ENCODE measurements at regions of chr2 and their contacts with region 1.

Region 1: DNA sequence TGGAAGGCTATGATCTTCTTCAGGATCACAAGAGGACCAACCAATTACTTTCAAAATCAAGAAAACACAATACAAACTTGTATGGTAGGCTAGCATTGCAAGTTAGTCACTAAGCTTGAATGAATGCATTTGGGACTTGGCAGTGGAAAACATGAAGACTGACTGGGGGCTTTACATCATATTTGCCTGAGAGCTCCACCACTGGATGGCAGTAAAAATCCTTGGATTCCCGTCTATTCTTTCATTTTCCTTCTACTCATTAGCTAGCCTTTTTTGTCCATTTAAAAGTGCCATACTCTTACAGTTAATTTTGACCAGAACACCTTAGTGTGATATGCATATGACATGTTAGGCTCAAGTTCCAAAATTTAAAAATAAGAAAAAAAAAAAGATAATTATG is 63.5 kb upstream of the RASGRP3 start:
- DNase-seq: peak; percentile 48
- H3K4me3 ChIP-seq: no peak overlapping the region
- H3K27ac ChIP-seq: no peak overlapping the region
- H3K4me1 ChIP-seq: no peaks in the 10 kb centered on the region
- H3K27me3 ChIP-seq: no peaks in the 10 kb centered on the region
- CTCF ChIP-seq: peak; percentile 60

Region 2: DNA sequence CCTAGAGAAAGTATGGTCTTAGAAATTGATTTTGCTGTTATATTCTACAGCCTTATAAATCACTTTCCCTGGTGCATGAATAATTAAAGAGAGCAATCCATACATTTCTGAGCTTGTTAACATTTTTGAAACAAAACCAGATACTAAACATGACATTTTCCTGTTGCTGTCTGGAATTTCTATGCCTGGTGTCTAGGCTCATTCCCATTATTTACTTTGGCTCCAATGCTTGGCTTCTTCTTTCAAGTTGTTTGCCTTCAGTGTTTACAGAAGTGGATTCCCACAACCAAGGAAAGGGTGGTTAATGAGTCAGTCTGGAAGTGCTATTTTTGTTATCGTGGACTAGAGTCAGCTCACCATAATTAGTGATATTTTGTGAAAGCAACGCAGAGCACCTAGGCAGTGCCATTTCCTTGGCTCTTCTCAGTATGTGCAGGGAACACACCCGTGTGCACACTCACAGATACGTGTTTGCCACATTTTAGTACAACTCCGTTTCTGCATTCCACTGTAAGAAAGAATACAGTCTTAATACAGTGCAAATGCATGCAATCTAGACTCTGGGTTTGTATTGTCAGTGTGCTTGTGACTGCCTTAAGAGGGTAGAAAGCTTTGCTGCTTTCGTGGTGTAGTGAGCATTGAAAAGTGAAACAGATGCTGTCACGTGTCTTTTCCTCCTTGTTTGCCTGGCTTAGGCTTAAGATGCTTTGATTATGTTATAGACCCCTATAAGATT is 121.5 kb before region 1 on chr2:
- CTCF ChIA-PET with region 1: no interaction called
- POLR2A ChIA-PET with region 1: no interaction called
- intact Hi-C with region 1: no loop called
- DNase-seq: no peak
- H3K4me3 ChIP-seq: no peak overlapping the region
- H3K27ac ChIP-seq: no peak overlapping the region
- H3K4me1 ChIP-seq: no peaks in the 10 kb centered on the region
- H3K27me3 ChIP-seq: no peaks in the 10 kb centered on the region
- CTCF ChIP-seq: no peak

Region 3: GRCh38 chr2:33583194-33583938 is 170.4 kb after region 1 on chr2:
- CTCF ChIA-PET with region 1: interaction called, 4 read pairs
- POLR2A ChIA-PET with region 1: no interaction called
- intact Hi-C with region 1: loop called (anchors 5 kb)
- DNase-seq: peak; percentile 54
- H3K4me3 ChIP-seq: no peak overlapping the region
- H3K27ac ChIP-seq: no peak overlapping the region
- H3K4me1 ChIP-seq: no peaks in the 10 kb centered on the region
- H3K27me3 ChIP-seq: no peaks in the 10 kb centered on the region
- CTCF ChIP-seq: peak; percentile 82

Measured in A673 (cell line).